WTC11 (cell line): ENCODE measurements at regions of chr14 and their contacts with region 1.

Region 1: DNA sequence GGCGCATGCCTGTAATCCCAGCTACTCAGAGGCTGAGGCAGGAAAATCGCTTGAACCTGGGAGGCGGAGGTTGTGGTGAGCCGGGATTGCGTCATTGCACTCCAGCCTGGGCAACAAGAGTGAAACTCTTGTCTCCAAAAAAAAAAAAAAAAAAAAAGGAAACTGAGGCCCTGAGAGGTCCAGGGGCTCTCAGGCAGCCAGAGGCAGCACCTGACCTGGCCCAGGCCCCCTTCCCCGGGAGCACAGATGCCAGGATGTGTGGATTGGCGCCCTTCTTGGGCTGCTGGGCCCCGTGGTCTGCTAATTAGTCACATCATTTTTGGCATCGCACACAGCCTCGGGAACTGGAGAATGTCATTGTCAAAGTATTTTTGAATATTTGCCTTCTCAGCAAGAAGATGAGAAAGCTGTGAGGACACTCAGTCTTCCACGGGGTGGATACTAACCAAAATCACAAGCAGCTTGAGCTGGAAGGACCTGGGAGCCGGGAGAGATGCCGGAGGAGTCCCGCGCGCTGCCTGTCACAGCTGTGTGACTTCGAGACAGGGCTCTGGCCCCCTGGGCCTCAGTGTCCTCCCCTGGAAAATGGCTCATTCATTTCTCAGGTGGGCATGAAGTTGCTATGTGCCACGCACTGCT is 12.6 kb upstream of the RCOR1 start:
- DNase-seq: no peak
- ATAC-seq: no peak
- H3K4me3 Mint-ChIP-seq: no peak overlapping the region
- H3K27ac Mint-ChIP-seq: no peak overlapping the region
- H3K4me1 Mint-ChIP-seq: peaks cover 14% of the 10 kb centered on the region
- H3K27me3 Mint-ChIP-seq: no peaks in the 10 kb centered on the region; the same call in 1 of the 2 replicates
- CTCF ChIP-seq: no peak

Region 2: DNA sequence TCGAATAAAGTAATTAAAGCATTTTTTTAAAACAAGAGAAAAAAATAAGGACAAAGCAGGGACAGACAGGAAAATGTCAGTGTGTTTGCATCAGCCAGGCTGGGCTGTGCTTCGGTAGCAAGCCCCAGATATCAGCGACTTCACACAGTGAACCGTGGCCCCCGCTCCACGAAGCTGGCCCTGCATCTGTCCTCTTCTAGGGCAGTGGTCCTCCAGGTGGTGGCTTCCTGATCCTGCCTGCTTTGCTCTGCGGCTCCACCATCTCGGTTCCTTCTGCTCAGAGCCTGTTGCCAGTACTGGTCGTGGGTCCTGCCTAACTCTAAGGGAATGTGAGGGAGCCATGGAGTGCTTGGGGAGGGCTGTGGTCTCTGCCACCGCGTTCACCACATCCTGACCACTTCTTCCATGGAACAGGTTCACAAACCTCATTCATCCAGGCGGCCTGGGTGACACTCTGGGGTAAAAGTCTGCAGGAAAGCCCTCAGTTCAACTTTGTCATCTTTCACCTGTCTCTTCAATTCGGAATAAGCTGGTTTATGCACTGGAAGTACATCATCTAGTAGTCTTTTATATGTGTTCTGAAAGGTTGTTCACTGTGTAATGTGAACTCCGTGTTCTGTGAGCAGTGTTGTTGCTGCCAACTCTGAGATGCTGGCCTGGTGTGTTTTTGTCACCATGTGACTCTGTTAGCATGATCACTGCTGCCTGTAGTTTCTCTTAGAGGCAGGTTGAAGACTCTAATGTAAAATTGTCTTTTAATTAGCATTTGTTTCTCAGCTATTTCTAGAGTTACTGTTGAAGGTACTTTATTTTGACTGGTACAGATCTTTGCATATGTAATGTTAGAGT is 118.1 kb before region 1 on chr14:
- CTCF ChIA-PET with region 1: no interaction called
- POLR2A ChIA-PET with region 1: no interaction called
- DNase-seq: no peak
- ATAC-seq: no peak
- H3K4me3 Mint-ChIP-seq: no peak overlapping the region
- H3K27ac Mint-ChIP-seq: peak overlapping the region; percentile 68; the same call in 1 of the 2 replicates
- H3K4me1 Mint-ChIP-seq: no peaks in the 10 kb centered on the region
- H3K27me3 Mint-ChIP-seq: no peaks in the 10 kb centered on the region
- CTCF ChIP-seq: no peak

Region 3: DNA sequence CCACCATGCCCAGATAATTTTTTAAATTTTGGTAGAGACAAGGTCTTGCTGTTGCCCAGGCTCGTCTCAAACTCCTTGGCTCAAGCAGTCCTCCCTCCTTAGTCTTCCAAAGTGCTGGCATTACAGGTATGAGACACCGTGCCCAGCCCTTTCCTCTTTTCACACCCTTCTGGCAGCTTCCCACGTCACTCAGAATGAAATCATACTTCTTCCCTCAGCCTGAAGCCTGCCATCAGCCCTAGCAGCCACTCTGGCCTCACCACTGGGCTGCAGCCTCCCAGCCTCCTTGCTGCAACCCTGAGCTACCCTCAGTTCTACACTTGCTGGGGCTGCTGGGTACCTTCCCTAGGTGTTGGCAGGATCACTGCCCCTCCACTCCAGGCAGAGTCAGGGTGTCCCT is 88.4 kb before region 1 on chr14:
- CTCF ChIA-PET with region 1: no interaction called
- POLR2A ChIA-PET with region 1: no interaction called
- DNase-seq: no peak
- ATAC-seq: no peak
- H3K4me3 Mint-ChIP-seq: no peak overlapping the region
- H3K27ac Mint-ChIP-seq: peak overlapping the region; percentile 72; the same call in 1 of the 2 replicates
- H3K4me1 Mint-ChIP-seq: no peaks in the 10 kb centered on the region
- H3K27me3 Mint-ChIP-seq: no peaks in the 10 kb centered on the region
- CTCF ChIP-seq: no peak

Region 4: GRCh38 chr14:102560458-102561154 is 19.2 kb before region 1 on chr14:
- CTCF ChIA-PET with region 1: interaction called, 3 read pairs
- POLR2A ChIA-PET with region 1: interaction called, 10 read pairs
- DNase-seq: no peak
- ATAC-seq: no peak
- H3K4me3 Mint-ChIP-seq: no peak overlapping the region
- H3K27ac Mint-ChIP-seq: no peak overlapping the region
- H3K4me1 Mint-ChIP-seq: no peaks in the 10 kb centered on the region
- H3K27me3 Mint-ChIP-seq: peaks cover 6% of the 10 kb centered on the region; the same call in 1 of the 2 replicates
- CTCF ChIP-seq: no peak

Region 5: GRCh38 chr14:102591889-102592763 is 12.3 kb after region 1 on chr14 and contains the start of gene RCOR1:
- CTCF ChIA-PET with region 1: interaction called, 10 read pairs
- POLR2A ChIA-PET with region 1: no interaction called
- DNase-seq: peak; percentile 98
- ATAC-seq: peak; percentile 87
- H3K4me3 Mint-ChIP-seq: peak within 1 kb of the TSS; percentile 81
- H3K27ac Mint-ChIP-seq: peak within 1 kb of the TSS; percentile 95
- H3K4me1 Mint-ChIP-seq: peaks cover 41% of the 10 kb centered on the region
- H3K27me3 Mint-ChIP-seq: peaks cover 5% of the 10 kb centered on the region; the same call in 1 of the 2 replicates
- CTCF ChIP-seq: no peak
- total RNA-seq, gene RCOR1: 25.1 to 25.4 TPM (median 25.4 TPM) in 3 replicates